Sigmoid colon (tissue), 7 donors: ENCODE measurements at regions of chr4 and their contacts with region 1.

Region 1: GRCh38 chr4:87235020-87235671 is 14.7 kb upstream of the KLHL8 start:
- DNase-seq: no peak
- H3K4me3 ChIP-seq: peak overlapping the region; percentile 25 to 49 (median 45)
- H3K27ac ChIP-seq: peak overlapping the region in 2 of 4 donors; percentile 35 to 54
- H3K4me1 ChIP-seq: peaks cover 0 to 14% (median 2%) of the 10 kb centered on the region in 4 donors
- H3K27me3 ChIP-seq: no peaks in the 10 kb centered on the region
- CTCF ChIP-seq: no peak
- EP300 ChIP-seq: no peak
- POLR2A ChIP-seq: no peak

Region 2: DNA sequence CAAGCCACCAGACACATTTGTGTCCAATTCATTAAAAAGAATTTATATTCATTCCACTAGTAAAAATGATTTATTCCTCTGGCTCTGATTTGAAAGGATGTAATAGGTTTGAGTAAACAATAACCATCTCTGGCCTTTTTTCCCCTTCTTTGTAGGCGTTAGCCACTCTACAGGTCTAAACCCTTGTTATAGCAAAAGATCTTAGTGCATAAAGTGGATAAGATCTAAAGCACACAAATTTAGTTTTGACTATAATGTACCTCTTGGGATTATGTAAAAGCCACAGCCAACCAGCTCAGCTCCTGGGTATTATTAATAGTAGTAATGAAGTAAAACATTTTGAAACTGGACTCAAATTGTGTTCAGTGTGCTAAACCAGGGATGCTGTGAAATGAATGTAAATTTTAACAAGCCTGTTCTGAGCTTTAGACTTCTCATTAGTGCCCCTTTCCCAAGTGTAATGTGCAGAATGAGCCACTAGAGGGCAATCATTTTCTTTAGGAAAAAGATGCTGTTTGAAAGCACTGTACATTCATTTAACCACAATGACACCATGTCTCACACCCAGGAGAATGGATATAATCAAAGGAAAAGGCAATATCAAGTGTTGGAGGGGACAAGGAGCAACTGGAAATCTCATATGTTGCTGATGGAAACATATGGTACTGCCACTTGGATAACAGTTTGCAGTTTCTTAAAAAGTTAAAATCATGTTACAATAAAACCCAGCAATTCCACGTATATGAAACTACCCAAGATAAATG is 84.5 kb before region 1 on chr4:
- intact Hi-C with region 1: loop called (anchors 1 kb)
- DNase-seq: no peak
- H3K4me3 ChIP-seq: no peak overlapping the region
- H3K27ac ChIP-seq: peak overlapping the region in 3 of 4 donors; percentile 53 to 70 (median 63)
- H3K4me1 ChIP-seq: peaks cover 0 to 35% (median 22%) of the 10 kb centered on the region in 4 donors
- H3K27me3 ChIP-seq: no peaks in the 10 kb centered on the region
- CTCF ChIP-seq: peak; percentile 70 to 91 (median 86)
- EP300 ChIP-seq: no peak
- POLR2A ChIP-seq: no peak

Region 3: GRCh38 chr4:87220094-87220822 is 14.9 kb before region 1 on chr4 and contains the start of gene KLHL8:
- intact Hi-C with region 1: loop called (anchors 2 kb)
- DNase-seq: peak; percentile 91
- H3K4me3 ChIP-seq: peak within 1 kb of the TSS; percentile 77 to 96 (median 91)
- H3K27ac ChIP-seq: peak within 1 kb of the TSS; percentile 92 to 94 (median 92)
- H3K4me1 ChIP-seq: peaks cover 0 to 15% (median 8%) of the 10 kb centered on the region in 4 donors
- H3K27me3 ChIP-seq: no peaks in the 10 kb centered on the region
- CTCF ChIP-seq: no peak
- EP300 ChIP-seq: no peak
- POLR2A ChIP-seq: peak; percentile 21 to 41
- total RNA-seq, gene KLHL8: 9.0 to 21.4 (median 12.2) TPM

Region 4: GRCh38 chr4:87304671-87305432 is 69.7 kb after region 1 on chr4:
- intact Hi-C with region 1: no loop called
- DNase-seq: no peak
- H3K4me3 ChIP-seq: no peak overlapping the region
- H3K27ac ChIP-seq: no peak overlapping the region
- H3K4me1 ChIP-seq: peaks cover 0 to 3% (median 0%) of the 10 kb centered on the region in 4 donors
- H3K27me3 ChIP-seq: no peaks in the 10 kb centered on the region
- CTCF ChIP-seq: no peak
- EP300 ChIP-seq: no peak
- POLR2A ChIP-seq: no peak